ENCODE measurements at regions of chr1 and their contacts with region 1.

Region 1: GRCh38 chr1:155437405-155437804 is 116.7 kb downstream of the RUSC1 start:
- ATAC-seq: no peak
- H3K4me3 ChIP-seq: no peak overlapping the region
- H3K27ac ChIP-seq: no peak overlapping the region
- H3K4me1 ChIP-seq: peaks cover 0 to 3% of the 10 kb centered on the region in 2 donors

Region 2: GRCh38 chr1:155499953-155500639 is 62.7 kb after region 1 on chr1:
- in situ Hi-C with region 1: loop called in 1 of 9 experiments (anchors 10 kb)
- ATAC-seq: peak in 6 of 8 experiments; percentile 74 to 94 (median 88)
- H3K4me3 ChIP-seq: no peak overlapping the region
- H3K27ac ChIP-seq: no peak overlapping the region
- H3K4me1 ChIP-seq: peaks cover 16 to 17% of the 10 kb centered on the region in 2 donors

Region 3: GRCh38 chr1:156608036-156608674 is 1170.8 kb after region 1 on chr1:
- in situ Hi-C with region 1: no loop called
- ATAC-seq: peak; percentile 98 to 100 (median 99)
- H3K4me3 ChIP-seq: no peak overlapping the region
- H3K27ac ChIP-seq: no peak overlapping the region
- H3K4me1 ChIP-seq: peaks cover 5 to 7% of the 10 kb centered on the region in 2 donors